A673 (cell line): ENCODE measurements at regions of chr5 and their contacts with region 1.

Region 1: DNA sequence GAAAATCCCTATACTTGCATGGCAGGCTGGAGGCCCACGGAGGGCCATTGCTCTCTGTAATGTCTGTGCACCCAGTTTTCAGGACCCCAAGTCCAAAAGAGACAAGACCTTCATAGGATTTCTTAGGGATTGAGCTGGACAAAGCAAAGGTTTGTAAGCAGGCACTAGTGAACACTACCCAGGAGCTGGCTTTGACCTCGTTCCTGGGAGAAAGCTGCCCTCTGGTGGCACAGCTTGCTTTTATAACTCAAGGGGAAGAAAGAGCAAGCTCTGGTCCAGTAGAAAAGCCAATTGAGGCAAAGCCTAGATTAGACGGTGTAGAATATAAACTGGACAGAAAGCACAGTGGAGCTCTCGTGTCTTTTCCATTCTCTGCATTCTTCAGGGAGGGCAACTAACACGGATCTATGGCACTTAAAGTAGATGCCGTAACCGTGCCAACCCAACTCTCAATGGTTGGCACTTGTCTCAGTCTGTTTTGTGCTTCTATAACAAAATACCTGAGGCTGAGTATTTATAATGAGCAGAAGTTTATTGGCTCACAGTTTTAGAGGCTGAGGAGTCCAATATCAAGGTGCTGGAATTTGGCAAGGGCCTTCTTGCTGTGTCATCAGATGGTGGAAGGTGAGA is 7.9 kb downstream of the GABRP start:
- DNase-seq: peak; percentile 27
- H3K4me3 ChIP-seq: no peak overlapping the region
- H3K27ac ChIP-seq: no peak overlapping the region
- H3K4me1 ChIP-seq: no peaks in the 10 kb centered on the region
- H3K27me3 ChIP-seq: peaks cover 7% of the 10 kb centered on the region
- CTCF ChIP-seq: peak; percentile 48

Region 2: GRCh38 chr5:170638454-170639220 is 152.8 kb before region 1 on chr5:
- CTCF ChIA-PET with region 1: interaction called, 7 read pairs
- POLR2A ChIA-PET with region 1: no interaction called
- intact Hi-C with region 1: loop called (anchors 5 kb)
- DNase-seq: peak; percentile 77
- H3K4me3 ChIP-seq: no peak overlapping the region
- H3K27ac ChIP-seq: no peak overlapping the region
- H3K4me1 ChIP-seq: peaks cover 7% of the 10 kb centered on the region
- H3K27me3 ChIP-seq: no peaks in the 10 kb centered on the region
- CTCF ChIP-seq: peak; percentile 82

Region 3: DNA sequence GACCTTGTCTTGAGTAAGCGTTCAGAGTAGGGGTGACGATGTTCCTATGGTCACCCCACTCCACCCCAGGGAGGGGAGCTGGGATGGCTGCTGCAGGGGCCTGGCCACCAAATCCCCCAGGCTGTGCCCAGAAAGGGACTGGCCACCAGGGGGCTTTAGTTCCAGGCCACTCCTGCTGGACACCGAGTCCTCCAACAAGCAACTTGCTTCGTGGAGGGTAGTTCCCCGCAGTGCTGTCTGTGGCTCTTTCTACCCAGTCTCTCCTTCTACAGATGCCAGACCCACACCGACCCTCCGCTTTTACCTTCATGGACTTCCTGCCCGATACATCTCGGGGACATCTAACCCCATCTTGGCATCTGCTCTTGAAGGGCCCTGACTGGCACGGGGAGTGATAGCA is 43.6 kb before region 1 on chr5:
- CTCF ChIA-PET with region 1: no interaction called
- POLR2A ChIA-PET with region 1: no interaction called
- intact Hi-C with region 1: loop called (anchors 1 kb)
- DNase-seq: no peak
- H3K4me3 ChIP-seq: no peak overlapping the region
- H3K27ac ChIP-seq: no peak overlapping the region
- H3K4me1 ChIP-seq: no peaks in the 10 kb centered on the region
- H3K27me3 ChIP-seq: peaks cover 24% of the 10 kb centered on the region
- CTCF ChIP-seq: peak; percentile 30; the same call in 1 of the 2 replicates

Region 4: GRCh38 chr5:171055875-171056454 is 264.5 kb after region 1 on chr5:
- CTCF ChIA-PET with region 1: no interaction called
- POLR2A ChIA-PET with region 1: no interaction called
- intact Hi-C with region 1: no loop called
- DNase-seq: no peak
- H3K4me3 ChIP-seq: no peak overlapping the region
- H3K27ac ChIP-seq: no peak overlapping the region
- H3K4me1 ChIP-seq: no peaks in the 10 kb centered on the region
- H3K27me3 ChIP-seq: no peaks in the 10 kb centered on the region
- CTCF ChIP-seq: no peak